ENCODE measurements at regions of chr2 and their contacts with region 1.

Region 1: DNA sequence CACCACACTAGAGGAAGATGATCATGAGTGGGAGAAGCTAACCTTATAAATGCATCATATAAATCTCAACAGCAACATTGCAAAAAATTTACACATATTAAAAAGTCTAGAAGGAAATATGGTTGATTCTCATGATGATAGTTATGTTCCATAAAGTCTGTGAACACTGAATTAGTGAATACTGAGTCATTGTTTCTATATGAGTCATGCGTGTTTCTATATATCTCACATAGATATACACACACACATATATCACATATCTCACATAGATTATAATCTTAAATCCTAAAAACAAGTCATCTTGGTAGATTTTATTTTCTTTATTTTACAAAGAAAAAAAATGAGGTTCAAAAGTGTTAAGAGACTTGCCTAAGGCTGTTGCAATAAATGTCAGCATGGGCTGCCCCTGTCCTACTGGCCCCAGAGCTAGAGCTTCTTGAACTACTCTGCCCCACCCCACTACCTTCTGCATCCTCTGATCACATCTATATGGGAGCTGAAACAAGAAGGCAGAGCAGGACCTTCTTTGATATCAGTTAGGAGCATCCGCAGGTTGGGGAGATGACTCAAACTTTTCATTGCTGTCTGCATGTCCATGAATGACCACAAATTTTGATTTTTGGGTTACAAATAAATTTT is 81.8 kb upstream of the ADAM23 start:
- DNase-seq: peak; percentile 50
- H3K4me3 Mint-ChIP-seq: no peak overlapping the region
- H3K27ac Mint-ChIP-seq: no peak overlapping the region
- H3K4me1 Mint-ChIP-seq: peaks cover 11% of the 10 kb centered on the region
- H3K27me3 Mint-ChIP-seq: peaks cover 6% of the 10 kb centered on the region

Region 2: GRCh38 chr2:205474741-205475415 is 886.6 kb before region 1 on chr2:
- CTCF ChIA-PET with region 1: no interaction called
- POLR2A ChIA-PET with region 1: no interaction called
- intact Hi-C with region 1: loop called (anchors 5 kb)
- DNase-seq: peak; percentile 29
- H3K4me3 Mint-ChIP-seq: no peak overlapping the region
- H3K27ac Mint-ChIP-seq: no peak overlapping the region
- H3K4me1 Mint-ChIP-seq: peaks cover 5% of the 10 kb centered on the region
- H3K27me3 Mint-ChIP-seq: peaks cover 11% of the 10 kb centered on the region

Region 3: DNA sequence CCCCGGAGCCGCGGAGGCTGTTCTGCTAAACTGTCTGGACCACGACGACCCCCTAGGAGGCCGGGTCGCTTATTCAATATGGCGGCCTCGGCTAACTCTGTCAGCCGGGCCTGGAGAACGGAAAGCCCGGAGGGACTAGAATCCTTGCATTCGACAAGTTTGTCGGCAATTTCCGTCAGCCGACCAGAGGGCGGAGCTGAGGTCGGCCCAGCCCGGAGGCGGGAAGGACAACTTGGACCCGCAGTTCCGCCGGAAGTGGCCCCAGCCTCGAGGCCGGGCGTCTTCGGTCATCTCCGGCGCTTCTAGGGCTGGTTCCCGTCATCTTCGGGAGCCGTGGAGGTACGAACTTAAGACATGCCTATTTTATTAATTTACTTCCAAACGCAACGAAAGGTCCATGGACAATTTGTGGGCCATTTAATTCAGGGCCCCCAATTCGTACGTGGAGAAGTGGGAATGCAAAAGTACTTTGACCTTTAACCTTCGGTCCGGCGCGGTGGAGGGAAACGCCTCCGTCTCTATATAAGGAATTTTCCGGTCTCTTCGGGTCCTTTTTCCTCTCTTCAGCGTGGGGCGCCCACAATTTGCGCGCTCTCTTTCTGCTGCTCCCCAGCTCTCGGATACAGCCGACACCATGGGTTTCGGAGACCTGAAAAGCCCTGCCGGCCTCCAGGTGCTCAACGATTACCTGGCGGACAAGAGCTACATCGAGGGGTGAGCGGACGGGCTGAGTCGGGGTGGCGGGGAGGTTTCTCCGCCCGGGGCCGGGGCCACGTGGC is 202.0 kb before region 1 on chr2 and contains the starts of genes EEF1B2 and NDUFS1:
- CTCF ChIA-PET with region 1: no interaction called
- POLR2A ChIA-PET with region 1: no interaction called
- intact Hi-C with region 1: loop called (anchors 2 kb)
- DNase-seq: peak; percentile 98
- H3K4me3 Mint-ChIP-seq: peak within 1 kb of the TSS; percentile 96
- H3K27ac Mint-ChIP-seq: peak within 1 kb of the TSS; percentile 97
- H3K4me1 Mint-ChIP-seq: peaks cover 52% of the 10 kb centered on the region
- H3K27me3 Mint-ChIP-seq: no peaks in the 10 kb centered on the region
- total RNA-seq, gene EEF1B2: 1,180 to 1,194 TPM
- total RNA-seq, gene NDUFS1: 79.2 to 80.8 TPM

Region 4: GRCh38 chr2:206274434-206275268 is 86.9 kb before region 1 on chr2 and contains the start of gene ZDBF2:
- CTCF ChIA-PET with region 1: no interaction called
- POLR2A ChIA-PET with region 1: no interaction called
- intact Hi-C with region 1: loop called (anchors 2 kb)
- DNase-seq: peak; percentile 60
- H3K4me3 Mint-ChIP-seq: peak within 1 kb of the TSS; percentile 80
- H3K27ac Mint-ChIP-seq: peak within 1 kb of the TSS; percentile 73
- H3K4me1 Mint-ChIP-seq: peaks cover 21% of the 10 kb centered on the region
- H3K27me3 Mint-ChIP-seq: peaks cover 42% of the 10 kb centered on the region
- total RNA-seq, gene ZDBF2: 7.4 to 7.8 TPM

Region 5: DNA sequence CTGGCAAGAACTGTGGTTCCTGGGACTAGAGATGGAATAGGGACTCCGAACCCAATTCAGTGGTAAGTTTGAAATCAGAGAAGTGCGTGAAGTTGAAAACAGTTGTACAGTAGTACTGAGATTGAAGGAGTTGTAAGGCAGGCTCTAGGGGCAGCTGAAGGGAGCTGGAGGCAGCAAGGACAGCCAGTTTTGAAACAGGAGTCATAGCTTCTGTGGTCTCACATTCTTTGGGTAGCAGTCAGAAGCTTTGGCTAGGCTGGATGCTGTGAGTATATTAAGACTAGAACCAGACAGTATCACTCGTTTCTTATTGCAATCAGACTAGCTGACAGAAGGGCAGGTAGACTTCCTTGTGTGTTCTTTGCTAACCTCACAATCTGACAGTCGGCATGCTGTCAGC is 17.3 kb after region 1 on chr2:
- CTCF ChIA-PET with region 1: no interaction called
- POLR2A ChIA-PET with region 1: no interaction called
- intact Hi-C with region 1: no loop called
- DNase-seq: no peak
- H3K4me3 Mint-ChIP-seq: no peak overlapping the region
- H3K27ac Mint-ChIP-seq: no peak overlapping the region
- H3K4me1 Mint-ChIP-seq: no peaks in the 10 kb centered on the region
- H3K27me3 Mint-ChIP-seq: peaks cover 8% of the 10 kb centered on the region

Region 6: DNA sequence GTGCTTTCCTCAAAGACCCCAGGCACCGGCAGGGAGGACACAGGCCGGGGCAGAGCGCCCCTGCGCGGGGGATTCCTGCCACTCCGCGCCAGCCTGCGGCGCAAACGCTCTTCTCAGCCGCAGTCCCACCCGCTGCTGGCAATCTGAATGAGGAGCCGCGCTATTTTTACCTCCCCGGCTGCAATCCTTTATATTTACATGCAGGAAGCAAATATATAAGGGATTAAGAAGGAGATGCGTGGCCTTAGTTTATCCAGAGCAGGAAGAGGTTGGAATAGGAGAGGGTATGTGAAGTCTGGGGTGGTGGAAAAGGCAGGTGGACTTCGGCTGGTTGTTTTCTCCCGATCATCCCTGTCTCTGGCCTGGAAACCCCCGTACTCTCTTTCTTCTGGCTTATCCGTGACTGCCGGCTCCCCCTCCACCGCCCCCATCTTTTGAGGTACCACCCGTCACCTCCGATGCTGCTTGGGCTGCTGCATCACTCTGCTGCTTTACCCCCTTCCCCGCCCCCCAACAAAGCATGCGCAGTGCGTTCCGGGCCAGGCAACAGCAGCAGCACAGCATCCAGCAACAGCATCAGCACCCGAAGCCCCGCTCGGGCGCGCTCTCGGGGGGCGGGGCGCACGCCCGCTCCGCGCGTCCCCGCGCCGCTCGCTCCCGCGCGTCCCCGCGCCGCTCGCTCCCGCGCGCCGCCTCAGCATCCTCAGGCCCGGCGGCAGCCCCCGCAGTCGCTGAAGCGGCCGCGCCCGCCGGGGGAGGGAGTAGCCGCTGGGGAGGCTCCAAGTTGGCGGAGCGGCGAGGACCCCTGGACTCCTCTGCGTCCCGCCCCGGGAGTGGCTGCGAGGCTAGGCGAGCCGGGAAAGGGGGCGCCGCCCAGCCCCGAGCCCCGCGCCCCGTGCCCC is 81.6 kb after region 1 on chr2 and contains the start of gene ADAM23:
- CTCF ChIA-PET with region 1: no interaction called
- POLR2A ChIA-PET with region 1: no interaction called
- intact Hi-C with region 1: no loop called
- DNase-seq: peak; percentile 71
- H3K4me3 Mint-ChIP-seq: peak within 1 kb of the TSS; percentile 79
- H3K27ac Mint-ChIP-seq: no peak within 1 kb of the TSS
- H3K4me1 Mint-ChIP-seq: peaks cover 18% of the 10 kb centered on the region
- H3K27me3 Mint-ChIP-seq: peaks cover 57% of the 10 kb centered on the region
- total RNA-seq, gene ADAM23: 1.8 to 2.3 TPM

Region 7: DNA sequence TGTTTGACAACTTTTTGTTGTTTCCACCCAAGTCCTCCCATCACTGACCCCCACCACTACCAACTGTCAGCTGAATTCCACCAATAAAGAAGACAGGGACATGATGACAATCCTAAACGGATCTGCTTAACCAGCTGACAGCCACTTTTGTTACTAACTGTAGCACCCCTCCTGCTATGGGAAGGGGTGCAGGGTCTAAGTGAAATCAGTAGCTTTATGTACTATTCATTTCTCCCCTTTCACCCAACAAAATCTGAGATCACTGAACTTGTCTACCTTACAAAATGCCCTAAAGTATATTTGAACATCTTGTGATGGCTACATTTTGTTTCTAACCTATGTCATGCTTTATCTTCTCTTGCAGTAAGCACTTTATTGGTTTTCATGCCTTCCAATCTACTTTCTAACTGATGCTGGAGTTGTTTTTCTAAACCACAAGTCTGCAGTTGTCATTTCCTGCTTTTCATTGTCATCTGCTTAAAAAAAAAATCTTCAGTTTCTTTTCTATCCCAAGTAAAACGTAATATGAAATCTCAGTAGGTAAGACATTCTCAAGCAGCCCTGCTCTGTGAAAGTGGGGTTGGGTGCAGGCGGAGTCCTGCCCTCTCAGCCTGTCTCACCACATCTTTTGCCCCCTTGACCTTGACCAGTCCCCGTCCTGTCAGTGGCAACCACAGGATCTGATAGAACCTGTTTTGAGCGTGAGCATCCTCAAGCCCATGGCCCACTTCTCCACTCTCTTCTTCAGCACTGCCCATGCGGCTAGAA is 497.6 kb after region 1 on chr2:
- CTCF ChIA-PET with region 1: no interaction called
- POLR2A ChIA-PET with region 1: no interaction called
- intact Hi-C with region 1: loop called (anchors 1 kb)
- DNase-seq: peak; percentile 30
- H3K4me3 Mint-ChIP-seq: peak overlapping the region; percentile 4
- H3K27ac Mint-ChIP-seq: peak overlapping the region; percentile 42
- H3K4me1 Mint-ChIP-seq: peaks cover 15% of the 10 kb centered on the region
- H3K27me3 Mint-ChIP-seq: no peaks in the 10 kb centered on the region